ENCODE measurements at regions of chr16 and their contacts with region 1.

Region 1: DNA sequence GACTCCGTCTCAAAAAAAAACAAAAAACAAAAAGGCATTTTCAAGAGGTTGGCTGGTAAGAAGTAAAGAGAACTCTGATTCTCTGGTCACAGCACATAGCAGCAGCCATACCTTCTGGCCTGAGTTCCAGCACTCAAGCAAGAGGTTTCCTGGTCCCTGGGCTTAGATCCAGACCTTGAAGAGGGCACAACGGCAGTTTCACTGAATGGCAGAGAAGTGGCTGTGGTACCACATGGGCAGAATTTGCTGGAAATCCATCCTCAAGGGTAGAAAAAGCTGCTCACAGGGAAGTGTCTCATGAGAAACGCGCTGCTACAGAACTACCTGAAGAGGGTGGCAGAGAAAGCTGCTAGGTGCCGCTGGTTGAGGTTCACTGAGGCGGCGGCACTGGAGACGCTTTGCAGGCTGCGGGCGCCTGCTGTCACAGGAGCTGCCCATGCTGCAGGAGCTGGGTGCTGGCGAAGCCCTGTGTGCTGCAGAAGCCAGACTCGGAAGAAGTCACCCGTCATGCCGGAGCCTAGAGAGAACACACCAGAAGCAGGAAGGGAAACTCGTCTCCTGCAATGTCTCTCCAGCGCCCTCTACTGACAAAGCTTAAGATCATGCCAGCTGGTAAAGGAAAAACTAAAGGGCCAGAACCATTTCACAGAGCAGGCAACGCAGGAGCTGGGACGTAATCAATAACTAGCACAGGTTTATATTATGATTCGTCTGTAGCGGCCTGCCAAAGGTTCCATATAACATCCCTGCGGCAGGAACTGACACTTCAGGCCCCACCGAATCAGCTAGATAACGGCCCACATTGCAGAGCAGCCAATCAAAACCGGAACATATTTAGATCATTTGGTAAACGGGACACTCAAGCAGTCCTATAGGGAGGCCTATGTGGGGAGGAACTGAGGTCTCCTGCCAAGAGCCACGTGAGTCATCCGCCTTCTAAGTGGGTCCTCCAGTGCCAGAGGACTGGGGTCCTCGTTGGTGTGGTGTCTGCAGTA is 5.4 kb upstream of the ZNF213 start:
- DNase-seq: peak; percentile 94
- H3K4me3 Mint-ChIP-seq: peak overlapping the region; percentile 88
- H3K27ac Mint-ChIP-seq: peak overlapping the region; percentile 85
- H3K4me1 Mint-ChIP-seq: peaks cover 63% of the 10 kb centered on the region
- H3K27me3 Mint-ChIP-seq: no peaks in the 10 kb centered on the region

Region 2: DNA sequence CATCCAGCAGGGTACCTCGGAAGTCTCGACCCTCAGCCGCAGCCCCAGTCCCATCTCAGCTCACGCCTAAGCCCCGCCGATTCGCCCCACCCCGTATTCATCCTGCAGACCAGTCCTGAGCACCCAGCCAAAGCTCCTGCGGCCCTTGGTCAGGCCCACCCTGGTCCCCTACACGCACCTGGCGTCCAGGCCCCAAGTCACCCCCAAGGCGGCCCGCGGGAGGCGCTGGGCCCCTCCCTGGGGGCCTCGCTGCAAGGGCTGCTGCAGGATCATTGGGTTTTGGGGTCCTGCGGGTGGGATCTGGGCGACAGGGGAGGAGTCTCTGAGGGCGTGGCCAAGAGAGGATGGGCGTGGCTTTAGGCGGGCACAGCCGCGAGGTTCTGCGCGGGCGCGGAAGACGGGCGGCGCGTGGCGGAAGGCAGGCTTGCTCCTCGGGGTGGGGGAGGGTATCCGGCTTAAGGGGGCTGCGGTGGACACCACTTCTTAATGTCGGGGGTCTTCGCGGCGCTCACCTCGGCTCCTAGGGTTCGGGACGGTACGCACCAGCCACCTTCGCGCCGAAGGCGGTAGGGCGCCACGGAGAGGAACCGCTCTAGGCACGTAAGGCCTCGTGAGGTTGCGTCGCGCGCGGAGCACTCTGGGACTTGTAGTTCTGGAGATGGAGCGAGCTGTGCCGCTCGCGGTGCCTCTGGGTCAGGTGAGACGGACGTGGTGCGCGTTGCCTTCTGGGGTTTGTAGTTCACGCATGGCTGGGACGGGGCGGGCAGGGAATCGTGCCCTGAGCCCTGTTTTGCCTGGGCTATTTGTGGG is 105.6 kb before region 1 on chr16 and contains the starts of genes HCFC1R1 and THOC6:
- CTCF ChIA-PET with region 1: interaction called, 77 read pairs
- POLR2A ChIA-PET with region 1: no interaction called
- DNase-seq: peak; percentile 97
- H3K4me3 Mint-ChIP-seq: peak within 1 kb of the TSS; percentile 84
- H3K27ac Mint-ChIP-seq: peak within 1 kb of the TSS; percentile 95
- H3K4me1 Mint-ChIP-seq: peaks cover 56% of the 10 kb centered on the region
- H3K27me3 Mint-ChIP-seq: peaks cover 4% of the 10 kb centered on the region
- total RNA-seq, gene HCFC1R1: 38.3 to 44.1 TPM
- total RNA-seq, gene THOC6: 49.5 to 58.4 TPM

Region 3: GRCh38 chr16:3065069-3065741 is 64.2 kb before region 1 on chr16 and contains the start of gene IL32:
- CTCF ChIA-PET with region 1: interaction called, 67 read pairs
- POLR2A ChIA-PET with region 1: interaction called, 11 read pairs
- DNase-seq: peak; percentile 82
- H3K4me3 Mint-ChIP-seq: peak within 1 kb of the TSS; percentile 100
- H3K27ac Mint-ChIP-seq: peak within 1 kb of the TSS; percentile 97
- H3K4me1 Mint-ChIP-seq: peaks cover 59% of the 10 kb centered on the region
- H3K27me3 Mint-ChIP-seq: no peaks in the 10 kb centered on the region
- total RNA-seq, gene IL32: 2,973 to 3,212 TPM

Region 4: GRCh38 chr16:3094289-3095027 is 35.0 kb before region 1 on chr16:
- CTCF ChIA-PET with region 1: interaction called, 38 read pairs
- POLR2A ChIA-PET with region 1: no interaction called
- DNase-seq: peak; percentile 64
- H3K4me3 Mint-ChIP-seq: no peak overlapping the region
- H3K27ac Mint-ChIP-seq: peak overlapping the region; percentile 11
- H3K4me1 Mint-ChIP-seq: peaks cover 62% of the 10 kb centered on the region
- H3K27me3 Mint-ChIP-seq: no peaks in the 10 kb centered on the region

Region 5: GRCh38 chr16:3112058-3112880 is 17.2 kb before region 1 on chr16 and contains the start of gene ZNF205:
- CTCF ChIA-PET with region 1: interaction called, 28 read pairs
- POLR2A ChIA-PET with region 1: no interaction called
- DNase-seq: no peak
- H3K4me3 Mint-ChIP-seq: no peak within 1 kb of the TSS
- H3K27ac Mint-ChIP-seq: no peak within 1 kb of the TSS
- H3K4me1 Mint-ChIP-seq: peaks cover 3% of the 10 kb centered on the region
- H3K27me3 Mint-ChIP-seq: peaks cover 8% of the 10 kb centered on the region
- total RNA-seq, gene ZNF205: not detected

Region 6: DNA sequence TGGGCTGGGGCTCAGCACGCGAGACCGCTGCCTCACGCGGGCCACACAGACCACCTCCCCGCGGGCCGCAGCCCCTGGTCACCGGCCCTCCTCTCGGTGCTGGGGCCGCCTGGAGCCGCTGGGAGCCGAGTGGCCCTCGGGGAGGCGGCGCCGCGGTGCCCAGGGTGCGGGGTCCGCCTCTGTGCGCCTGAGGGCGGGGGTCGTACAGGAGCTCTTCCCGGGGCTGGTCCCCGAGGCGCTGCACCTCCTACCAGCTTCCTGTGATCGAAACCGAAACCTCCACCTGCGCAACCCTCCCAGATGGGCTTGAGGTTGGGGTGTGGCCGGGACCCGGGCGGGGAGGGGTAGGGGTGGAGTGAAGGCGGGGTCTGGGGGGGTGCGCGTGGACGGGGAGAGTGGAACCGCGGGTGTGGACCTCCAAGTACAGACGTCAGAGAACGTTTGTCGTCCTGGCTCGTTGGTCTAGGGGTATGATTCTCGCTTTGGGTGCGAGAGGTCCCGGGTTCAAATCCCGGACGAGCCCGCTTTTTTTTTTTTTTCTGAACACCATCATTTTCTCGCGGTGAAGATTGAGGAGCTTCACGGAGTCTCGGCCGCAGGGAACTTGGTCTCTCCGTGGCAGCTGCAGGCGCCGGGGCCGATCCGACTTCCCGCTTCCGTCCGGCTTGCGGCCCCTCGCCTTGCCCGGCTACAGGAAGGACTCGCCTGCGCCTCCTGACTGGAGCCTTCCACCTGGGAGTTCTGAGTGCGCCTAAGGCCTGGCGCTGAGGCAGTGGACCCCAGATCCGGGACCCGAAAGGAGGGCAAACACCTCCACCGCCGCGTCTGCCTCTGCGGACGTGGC is 29.3 kb after region 1 on chr16:
- CTCF ChIA-PET with region 1: interaction called, 20 read pairs
- POLR2A ChIA-PET with region 1: no interaction called
- DNase-seq: peak; percentile 96
- H3K4me3 Mint-ChIP-seq: peak overlapping the region; percentile 88
- H3K27ac Mint-ChIP-seq: peak overlapping the region; percentile 91
- H3K4me1 Mint-ChIP-seq: peaks cover 47% of the 10 kb centered on the region
- H3K27me3 Mint-ChIP-seq: peaks cover 38% of the 10 kb centered on the region

Region 7: DNA sequence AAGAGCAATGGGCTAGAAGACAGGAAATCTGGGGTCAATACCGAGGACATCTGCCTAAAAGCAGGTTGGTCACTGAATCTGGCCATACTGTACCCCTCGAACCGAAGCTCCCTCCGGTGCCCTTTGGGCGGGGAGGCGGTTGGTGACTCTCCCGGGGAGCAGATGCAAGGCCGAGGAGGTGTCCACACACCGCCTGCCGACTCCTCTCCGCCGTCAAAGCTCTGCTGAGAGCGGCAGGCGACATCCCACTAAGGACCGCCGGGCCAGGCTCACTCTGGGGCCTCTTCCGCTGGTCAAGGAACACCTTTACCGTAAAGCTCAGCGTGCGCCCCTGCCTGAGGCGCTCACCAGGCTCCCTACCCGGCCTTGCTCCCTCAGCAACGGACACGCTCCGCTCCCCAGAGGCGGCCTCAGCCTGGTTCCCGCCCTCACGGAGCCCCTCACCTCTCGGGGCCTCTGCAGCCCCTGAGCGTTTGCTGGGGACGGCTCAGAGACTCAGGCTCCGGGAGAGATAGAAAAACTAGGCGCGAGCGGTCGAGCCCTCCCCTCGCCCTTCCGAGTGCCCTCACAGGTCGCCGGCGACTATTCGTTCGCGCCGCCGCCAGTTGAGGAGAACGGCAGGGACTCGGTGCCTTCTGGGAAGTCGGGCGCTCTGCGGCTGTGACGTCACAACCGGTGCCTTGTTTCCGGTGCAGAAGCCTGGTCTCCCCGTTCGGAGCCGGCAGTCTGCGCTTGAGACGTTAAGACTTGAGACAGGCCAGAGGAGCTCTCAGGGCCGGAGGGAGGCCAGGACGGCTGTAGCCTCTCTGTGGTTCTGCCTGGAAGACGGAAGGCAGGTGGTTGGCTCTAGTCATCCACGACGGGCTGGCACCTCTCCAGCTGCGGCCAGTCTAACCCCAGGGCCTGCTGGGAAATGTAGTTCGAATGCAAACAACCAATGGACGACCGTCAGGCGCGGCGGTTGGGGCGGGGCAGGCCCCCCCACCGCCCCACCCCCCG is 105.4 kb after region 1 on chr16 and contains the start of gene ZNF200:
- CTCF ChIA-PET with region 1: no interaction called
- POLR2A ChIA-PET with region 1: no interaction called
- DNase-seq: peak; percentile 96
- H3K4me3 Mint-ChIP-seq: peak within 1 kb of the TSS; percentile 85
- H3K27ac Mint-ChIP-seq: peak within 1 kb of the TSS; percentile 97
- H3K4me1 Mint-ChIP-seq: peaks cover 31% of the 10 kb centered on the region
- H3K27me3 Mint-ChIP-seq: no peaks in the 10 kb centered on the region
- total RNA-seq, gene ZNF200: 11.7 to 12.1 TPM

Region 8: GRCh38 chr16:4450926-4451619 is 1321.6 kb after region 1 on chr16:
- CTCF ChIA-PET with region 1: no interaction called
- POLR2A ChIA-PET with region 1: no interaction called
- DNase-seq: no peak
- H3K4me3 Mint-ChIP-seq: no peak overlapping the region
- H3K27ac Mint-ChIP-seq: no peak overlapping the region
- H3K4me1 Mint-ChIP-seq: no peaks in the 10 kb centered on the region
- H3K27me3 Mint-ChIP-seq: no peaks in the 10 kb centered on the region

Measured in activated CD4-positive, alpha-beta T cell treated with anti-CD3 and anti-CD28 coated beads, Interleukin-2, amount 10 ng/mL, durations not matched to agents 7 days and 5 days (primary cell).